PC-3 (cell line): ENCODE measurements at regions of chr7 and their contacts with region 1.

Region 1: DNA sequence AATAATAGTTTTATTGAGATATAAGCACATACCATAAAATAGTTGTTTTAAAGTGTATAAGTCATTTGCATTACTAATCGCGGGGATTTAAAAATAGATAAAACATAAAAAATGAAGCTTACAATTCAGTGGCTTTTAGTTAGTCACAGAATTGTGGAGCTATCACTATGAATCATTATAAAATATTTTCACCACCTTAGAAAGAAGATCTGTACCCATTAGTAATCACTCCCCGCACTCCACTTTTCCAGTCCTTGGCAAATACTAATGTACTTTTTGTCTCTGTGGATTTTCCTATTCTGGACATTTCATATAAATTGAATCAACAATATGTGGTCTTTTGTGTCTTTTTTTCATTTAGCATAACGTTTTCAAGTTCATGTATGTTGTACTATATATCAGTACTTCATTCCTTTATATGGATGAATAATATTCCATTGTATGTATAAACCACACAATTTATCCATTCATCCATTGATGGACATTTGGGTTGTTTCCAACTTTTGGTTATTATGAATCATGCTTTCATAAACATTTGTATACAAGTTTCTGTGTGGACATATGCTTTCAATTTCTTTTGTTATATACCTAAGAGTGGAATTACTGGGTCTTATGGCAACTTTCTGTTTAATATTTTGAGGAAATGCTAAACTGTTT is 162.5 kb downstream of the MAGI2 start:
- DNase-seq: peak; percentile 93
- ATAC-seq: peak; percentile 16
- H3K4me3 ChIP-seq: 0 out of 2 replicates have a peak overlapping the region, but pooled peaks have one; percentile 21
- H3K27ac ChIP-seq: peak overlapping the region; percentile 92
- H3K4me1 ChIP-seq: peaks cover 38% of the 10 kb centered on the region
- H3K27me3 ChIP-seq: no peaks in the 10 kb centered on the region
- CTCF ChIP-seq: no peak

Region 2: GRCh38 chr7:79461660-79462059 is 170.7 kb after region 1 on chr7:
- CTCF ChIA-PET with region 1: no interaction called
- POLR2A ChIA-PET with region 1: interaction called, 4 read pairs
- intact Hi-C with region 1: loop called (anchors 5 kb)
- DNase-seq: peak; percentile 86
- ATAC-seq: peak; percentile 98
- H3K4me3 ChIP-seq: peak overlapping the region; percentile 38; the same call in 1 of the 2 replicates
- H3K27ac ChIP-seq: peak overlapping the region; percentile 94
- H3K4me1 ChIP-seq: peaks cover 15% of the 10 kb centered on the region
- H3K27me3 ChIP-seq: no peaks in the 10 kb centered on the region
- CTCF ChIP-seq: no peak

Region 3: DNA sequence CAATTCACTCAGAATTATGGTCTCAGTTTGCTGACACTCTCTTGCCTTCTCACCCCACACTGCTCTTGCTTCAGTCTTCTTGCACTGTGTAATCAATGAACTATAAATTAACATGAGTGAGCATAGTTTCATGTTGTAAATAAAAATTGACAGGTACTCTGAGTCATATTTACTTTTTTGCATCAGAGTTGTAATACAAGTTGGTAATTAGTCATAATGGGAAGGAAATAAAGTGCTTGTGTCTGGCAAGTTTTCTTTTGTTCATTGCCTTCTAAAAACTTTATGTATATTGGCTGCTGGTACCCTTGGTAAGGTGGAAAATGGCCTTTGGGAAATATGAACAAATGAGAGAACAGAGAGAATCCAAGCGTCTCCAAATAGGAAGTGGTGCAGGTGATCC is 331.8 kb after region 1 on chr7:
- CTCF ChIA-PET with region 1: no interaction called
- POLR2A ChIA-PET with region 1: no interaction called
- intact Hi-C with region 1: loop called (anchors 5 kb)
- DNase-seq: peak; percentile 83
- ATAC-seq: peak; percentile 76
- H3K4me3 ChIP-seq: peak overlapping the region; percentile 41; the same call in 1 of the 2 replicates
- H3K27ac ChIP-seq: peak overlapping the region; percentile 95
- H3K4me1 ChIP-seq: peaks cover 37% of the 10 kb centered on the region
- H3K27me3 ChIP-seq: no peaks in the 10 kb centered on the region
- CTCF ChIP-seq: no peak

Region 4: GRCh38 chr7:79666472-79666871 is 375.5 kb after region 1 on chr7:
- CTCF ChIA-PET with region 1: no interaction called
- POLR2A ChIA-PET with region 1: interaction called, 15 read pairs
- intact Hi-C with region 1: no loop called
- DNase-seq: no peak
- ATAC-seq: no peak
- H3K4me3 ChIP-seq: no peak overlapping the region
- H3K27ac ChIP-seq: no peak overlapping the region
- H3K4me1 ChIP-seq: no peaks in the 10 kb centered on the region
- H3K27me3 ChIP-seq: no peaks in the 10 kb centered on the region
- CTCF ChIP-seq: no peak